HepG2 (cell line): ENCODE measurements at regions of chr18 and their contacts with region 1.

Region 1: GRCh38 chr18:12744103-12744502 is 41.3 kb downstream of the PSMG2 start:
- DNase-seq: peak; percentile 64
- ATAC-seq: peak; percentile 55
- H3K4me3 ChIP-seq: no peak overlapping the region
- H3K27ac ChIP-seq: no peak overlapping the region
- H3K4me1 ChIP-seq: peaks cover 37% of the 10 kb centered on the region
- H3K27me3 ChIP-seq: no peaks in the 10 kb centered on the region
- CTCF ChIP-seq: peak; percentile 62
- EP300 ChIP-seq: no peak
- POLR2A ChIP-seq: no peak
- RAD21 ChIP-seq: peak; percentile 25; the same call in 1 of the 2 replicates

Region 2: GRCh38 chr18:12552884-12553242 is 191.2 kb before region 1 on chr18:
- CTCF ChIA-PET with region 1: no interaction called
- POLR2A ChIA-PET with region 1: no interaction called
- in situ Hi-C with region 1: no loop called
- intact Hi-C with region 1: no loop called
- DNase-seq: no peak
- ATAC-seq: no peak
- H3K4me3 ChIP-seq: no peak overlapping the region
- H3K27ac ChIP-seq: no peak overlapping the region
- H3K4me1 ChIP-seq: peaks cover 16% of the 10 kb centered on the region
- H3K27me3 ChIP-seq: no peaks in the 10 kb centered on the region
- CTCF ChIP-seq: no peak
- EP300 ChIP-seq: no peak
- POLR2A ChIP-seq: no peak
- RAD21 ChIP-seq: no peak

Region 3: GRCh38 chr18:12768625-12769024 is 24.5 kb after region 1 on chr18:
- CTCF ChIA-PET with region 1: interaction called, 3 read pairs
- POLR2A ChIA-PET with region 1: no interaction called
- in situ Hi-C with region 1: no loop called
- intact Hi-C with region 1: loop called (anchors 1 kb)
- DNase-seq: no peak
- ATAC-seq: no peak
- H3K4me3 ChIP-seq: no peak overlapping the region; a peak in 1 of 6 replicates
- H3K27ac ChIP-seq: no peak overlapping the region
- H3K4me1 ChIP-seq: peaks cover 39% of the 10 kb centered on the region
- H3K27me3 ChIP-seq: no peaks in the 10 kb centered on the region
- CTCF ChIP-seq: no peak
- EP300 ChIP-seq: no peak
- POLR2A ChIP-seq: no peak
- RAD21 ChIP-seq: no peak

Region 4: DNA sequence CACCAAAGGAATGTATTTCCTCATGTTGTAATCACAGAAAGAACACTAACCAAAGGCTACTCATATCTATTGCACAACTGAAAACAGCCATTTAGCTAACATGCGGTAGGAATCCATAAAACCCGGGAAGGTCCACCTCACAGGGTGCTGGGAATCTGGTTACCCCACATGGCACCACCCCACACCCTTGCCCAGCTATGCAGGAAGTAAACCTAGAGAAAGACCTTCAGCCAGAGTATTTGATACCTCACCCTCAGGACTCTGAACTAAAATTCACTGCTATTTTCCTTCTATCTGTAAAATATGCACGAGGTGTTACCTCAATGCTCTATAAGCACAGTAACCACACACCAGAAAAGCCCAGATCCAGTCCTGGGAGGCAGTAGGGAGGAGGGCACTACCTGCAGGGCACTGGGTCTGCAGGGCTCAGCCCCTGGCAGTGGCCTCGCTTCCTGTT is 94.1 kb after region 1 on chr18:
- CTCF ChIA-PET with region 1: no interaction called
- POLR2A ChIA-PET with region 1: no interaction called
- in situ Hi-C with region 1: no loop called
- intact Hi-C with region 1: no loop called
- DNase-seq: peak; percentile 90
- ATAC-seq: peak; percentile 98
- H3K4me3 ChIP-seq: peak overlapping the region in 2 of 3 experiments; percentile 23 to 37; a peak in 4 of 6 replicates
- H3K27ac ChIP-seq: peak overlapping the region; percentile 85
- H3K4me1 ChIP-seq: peaks cover 24% of the 10 kb centered on the region
- H3K27me3 ChIP-seq: no peaks in the 10 kb centered on the region
- CTCF ChIP-seq: no peak
- EP300 ChIP-seq: peak; percentile 22 to 69; a peak in 2 of 4 replicates
- POLR2A ChIP-seq: no peak
- RAD21 ChIP-seq: no peak

Region 5: GRCh38 chr18:12890506-12890905 is 146.4 kb after region 1 on chr18:
- CTCF ChIA-PET with region 1: no interaction called
- POLR2A ChIA-PET with region 1: no interaction called
- in situ Hi-C with region 1: no loop called
- intact Hi-C with region 1: loop called (anchors 5 kb)
- DNase-seq: peak; percentile 45
- ATAC-seq: peak; percentile 90
- H3K4me3 ChIP-seq: no peak overlapping the region
- H3K27ac ChIP-seq: no peak overlapping the region
- H3K4me1 ChIP-seq: peaks cover 16% of the 10 kb centered on the region
- H3K27me3 ChIP-seq: 0 out of 5 replicates have a peak, but pooled peaks cover 0 to 3% of the 10 kb centered on the region in 2 experiments
- CTCF ChIP-seq: peak; percentile 43
- EP300 ChIP-seq: no peak
- POLR2A ChIP-seq: no peak
- RAD21 ChIP-seq: 0 out of 2 replicates have a peak, but pooled peaks have one; percentile 27

Region 6: DNA sequence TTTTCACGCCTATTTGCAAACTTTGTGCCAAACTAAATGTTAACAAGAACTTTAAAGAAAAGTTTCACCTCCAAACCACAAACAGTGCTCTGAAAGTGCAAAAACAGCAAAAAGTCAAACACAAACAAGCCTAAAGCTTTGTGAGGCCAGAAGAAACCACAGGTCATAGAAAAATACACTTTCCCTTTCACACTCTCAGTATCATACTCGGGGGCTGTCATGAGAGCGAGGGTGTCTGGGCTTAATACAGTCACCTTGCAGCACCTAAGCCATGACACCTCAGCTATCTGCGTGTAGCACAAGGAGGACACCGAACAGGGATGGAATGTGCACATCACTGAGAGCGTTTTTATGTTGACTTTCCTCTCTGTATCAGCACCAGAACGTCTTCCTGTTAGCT is 177.1 kb after region 1 on chr18:
- CTCF ChIA-PET with region 1: no interaction called
- POLR2A ChIA-PET with region 1: no interaction called
- in situ Hi-C with region 1: no loop called
- intact Hi-C with region 1: no loop called
- DNase-seq: peak; percentile 10
- ATAC-seq: peak; percentile 46; the same call in 2 of the 3 replicates
- H3K4me3 ChIP-seq: no peak overlapping the region
- H3K27ac ChIP-seq: no peak overlapping the region
- H3K4me1 ChIP-seq: peaks cover 13% of the 10 kb centered on the region
- H3K27me3 ChIP-seq: no peaks in the 10 kb centered on the region
- CTCF ChIP-seq: no peak
- EP300 ChIP-seq: no peak
- POLR2A ChIP-seq: no peak
- RAD21 ChIP-seq: no peak